ENCODE measurements at regions of chr9 and their contacts with region 1.

Region 1: DNA sequence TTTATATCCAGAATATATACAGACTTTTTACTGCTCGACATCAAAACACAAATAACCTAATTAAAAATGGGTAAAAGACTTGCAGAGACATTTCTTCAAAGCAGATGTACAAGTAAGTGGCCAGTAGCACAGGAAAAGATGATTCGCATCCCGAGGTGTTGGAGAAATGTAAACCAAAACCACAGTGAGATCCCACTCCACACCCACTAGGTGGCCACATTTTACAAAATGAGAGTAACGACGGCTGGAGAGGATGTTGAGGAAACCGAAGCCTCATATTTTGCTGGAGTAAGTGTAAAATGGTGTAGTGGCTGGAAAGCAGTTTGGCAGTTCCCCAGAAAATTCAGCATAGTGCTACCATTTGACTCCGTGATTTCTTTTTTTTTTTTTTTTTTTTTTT is 21.2 kb upstream of the GBGT1 start:
- DNase-seq: peak; percentile 63

Region 2: GRCh38 chr9:133331221-133331620 is 146.3 kb after region 1 on chr9:
- CTCF ChIA-PET with region 1: interaction called, 37 read pairs
- POLR2A ChIA-PET with region 1: interaction called, 6 read pairs
- DNase-seq: no peak

Region 3: DNA sequence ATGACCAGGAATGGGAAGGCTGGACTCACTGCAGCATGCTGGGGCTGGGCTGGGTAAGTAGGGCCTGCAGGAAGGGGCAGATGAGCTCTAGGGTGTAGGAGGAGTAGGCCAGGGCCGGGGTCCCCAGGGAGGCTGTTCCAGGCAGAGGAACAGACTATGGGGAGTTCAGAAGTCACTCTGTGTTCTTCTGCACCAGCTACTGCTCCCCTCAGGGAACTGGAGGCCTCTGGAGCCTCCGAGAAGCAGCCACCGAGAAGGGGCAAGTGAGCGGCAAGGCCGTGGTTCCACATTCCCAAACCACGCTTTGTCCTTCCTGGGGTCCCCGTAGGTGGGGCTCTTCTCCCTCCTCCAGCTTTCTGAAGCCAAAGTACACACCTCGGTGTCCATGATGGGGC is 302.4 kb after region 1 on chr9:
- CTCF ChIA-PET with region 1: interaction called, 11 read pairs
- POLR2A ChIA-PET with region 1: no interaction called
- DNase-seq: no peak

Measured in HEK293T (cell line).